MCF 10A (cell line): ENCODE measurements at regions of chr7 and their contacts with region 1.

Region 1: DNA sequence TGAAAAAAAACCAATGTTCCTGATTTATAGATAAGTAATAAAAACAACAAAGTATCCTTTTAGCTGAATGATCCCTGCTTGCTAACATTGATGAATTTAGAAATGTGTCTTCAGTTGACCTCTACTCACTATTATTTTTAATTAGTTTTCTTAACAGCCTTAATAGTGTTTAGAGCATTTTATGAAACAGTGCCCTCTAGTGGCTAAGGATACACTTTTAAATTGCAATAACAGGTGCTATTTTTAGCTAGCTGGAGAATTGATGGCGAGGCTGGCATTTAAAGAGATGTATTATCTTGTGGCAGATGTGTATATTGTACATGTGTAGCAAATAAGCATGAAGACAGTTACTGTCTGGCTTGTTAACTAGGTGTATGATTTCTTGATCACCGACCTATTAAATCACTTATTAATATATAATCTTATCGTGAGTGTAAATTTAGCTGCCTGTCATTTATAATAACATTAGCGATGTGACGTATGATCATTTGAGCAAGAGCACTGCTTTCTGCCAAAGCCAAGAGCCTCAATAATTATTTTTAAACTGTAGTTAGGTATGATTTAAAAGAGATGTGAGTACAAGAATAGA is 451.9 kb downstream of the DPP6 start:
- DNase-seq: peak; percentile 34
- H3K4me3 Mint-ChIP-seq: no peak overlapping the region
- H3K27ac Mint-ChIP-seq: no peak overlapping the region
- H3K4me1 Mint-ChIP-seq: no peaks in the 10 kb centered on the region
- H3K27me3 Mint-ChIP-seq: no peaks in the 10 kb centered on the region
- CTCF ChIP-seq: peak; percentile 44

Region 2: GRCh38 chr7:154469652-154470051 is 34.4 kb before region 1 on chr7:
- CTCF ChIA-PET with region 1: interaction called, 10 read pairs
- POLR2A ChIA-PET with region 1: no interaction called
- intact Hi-C with region 1: no loop called
- DNase-seq: no peak
- H3K4me3 Mint-ChIP-seq: no peak overlapping the region
- H3K27ac Mint-ChIP-seq: no peak overlapping the region
- H3K4me1 Mint-ChIP-seq: no peaks in the 10 kb centered on the region
- H3K27me3 Mint-ChIP-seq: no peaks in the 10 kb centered on the region
- CTCF ChIP-seq: no peak

Region 3: GRCh38 chr7:154493594-154493993 is 10.5 kb before region 1 on chr7:
- CTCF ChIA-PET with region 1: interaction called, 28 read pairs
- POLR2A ChIA-PET with region 1: interaction called, 3 read pairs
- intact Hi-C with region 1: no loop called
- DNase-seq: no peak
- H3K4me3 Mint-ChIP-seq: no peak overlapping the region
- H3K27ac Mint-ChIP-seq: no peak overlapping the region
- H3K4me1 Mint-ChIP-seq: no peaks in the 10 kb centered on the region
- H3K27me3 Mint-ChIP-seq: no peaks in the 10 kb centered on the region
- CTCF ChIP-seq: no peak

Region 4: GRCh38 chr7:154517768-154518167 is 13.7 kb after region 1 on chr7:
- CTCF ChIA-PET with region 1: interaction called, 22 read pairs
- POLR2A ChIA-PET with region 1: interaction called, 4 read pairs
- intact Hi-C with region 1: no loop called
- DNase-seq: no peak
- H3K4me3 Mint-ChIP-seq: no peak overlapping the region
- H3K27ac Mint-ChIP-seq: no peak overlapping the region
- H3K4me1 Mint-ChIP-seq: no peaks in the 10 kb centered on the region
- H3K27me3 Mint-ChIP-seq: no peaks in the 10 kb centered on the region
- CTCF ChIP-seq: no peak

Region 5: DNA sequence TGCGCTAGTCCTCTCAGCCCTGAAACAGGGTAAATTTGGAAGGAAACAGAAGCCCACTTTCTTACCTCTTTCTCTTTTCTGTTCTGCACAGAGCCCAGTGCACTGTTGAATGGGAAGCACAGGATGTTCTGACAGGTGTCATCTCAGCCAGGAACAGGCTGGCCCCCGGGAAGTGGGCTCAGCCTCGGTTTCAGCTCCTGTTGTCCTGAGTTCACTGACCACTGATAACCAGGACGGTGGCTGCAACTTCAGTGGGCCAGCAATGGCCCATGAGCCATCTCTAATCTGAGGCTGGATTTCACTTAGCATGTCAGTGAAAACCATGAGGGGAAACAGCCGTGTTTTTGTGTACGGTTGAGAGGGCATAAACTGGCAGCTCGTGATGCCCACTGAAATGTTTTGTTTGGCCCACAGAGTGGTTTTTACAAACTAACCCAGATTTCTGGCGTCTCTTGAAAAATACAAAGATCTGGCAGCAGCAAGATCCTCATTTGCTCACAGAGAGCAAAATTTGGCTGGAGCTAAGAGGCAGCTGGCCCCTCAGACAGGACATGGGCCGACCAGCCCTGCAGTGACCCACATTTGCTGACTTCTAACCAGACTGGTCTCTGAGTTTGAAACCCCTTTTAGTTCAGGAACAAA is 43.0 kb after region 1 on chr7:
- CTCF ChIA-PET with region 1: no interaction called
- POLR2A ChIA-PET with region 1: no interaction called
- intact Hi-C with region 1: no loop called
- DNase-seq: no peak
- H3K4me3 Mint-ChIP-seq: no peak overlapping the region
- H3K27ac Mint-ChIP-seq: no peak overlapping the region
- H3K4me1 Mint-ChIP-seq: no peaks in the 10 kb centered on the region
- H3K27me3 Mint-ChIP-seq: no peaks in the 10 kb centered on the region
- CTCF ChIP-seq: no peak

Region 6: DNA sequence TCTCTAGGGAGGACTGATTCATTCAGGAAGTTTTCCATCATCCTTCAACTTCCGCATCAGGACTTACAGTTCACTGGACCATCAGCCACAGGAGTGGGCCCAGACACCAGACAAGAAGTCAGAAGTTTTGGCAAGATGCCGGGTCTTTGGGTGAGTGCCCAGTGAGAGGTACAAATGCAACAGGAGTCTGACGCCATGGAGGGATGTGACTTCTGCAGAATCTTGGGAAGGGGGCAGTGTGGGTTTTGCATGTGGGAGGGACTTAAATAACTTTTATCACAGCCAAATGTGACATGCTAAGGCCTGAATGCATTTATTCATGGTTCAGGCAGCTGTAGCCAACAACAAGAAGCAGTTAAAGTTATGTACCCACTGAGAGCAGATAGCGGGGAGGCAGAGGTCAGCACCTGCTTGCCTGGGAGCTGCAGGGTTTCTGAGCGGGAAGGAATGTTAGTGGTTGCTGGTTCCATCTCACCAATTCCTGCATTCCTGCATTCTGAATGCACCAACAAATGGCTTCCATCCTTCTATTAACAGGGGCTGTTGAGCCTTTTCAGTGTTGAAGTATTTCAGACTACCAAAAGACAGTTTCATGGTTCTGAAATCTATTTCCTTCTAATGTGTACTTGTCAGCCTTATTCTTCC is 123.7 kb after region 1 on chr7:
- CTCF ChIA-PET with region 1: no interaction called
- POLR2A ChIA-PET with region 1: no interaction called
- intact Hi-C with region 1: no loop called
- DNase-seq: no peak
- H3K4me3 Mint-ChIP-seq: no peak overlapping the region
- H3K27ac Mint-ChIP-seq: no peak overlapping the region
- H3K4me1 Mint-ChIP-seq: no peaks in the 10 kb centered on the region
- H3K27me3 Mint-ChIP-seq: no peaks in the 10 kb centered on the region
- CTCF ChIP-seq: no peak

Region 7: DNA sequence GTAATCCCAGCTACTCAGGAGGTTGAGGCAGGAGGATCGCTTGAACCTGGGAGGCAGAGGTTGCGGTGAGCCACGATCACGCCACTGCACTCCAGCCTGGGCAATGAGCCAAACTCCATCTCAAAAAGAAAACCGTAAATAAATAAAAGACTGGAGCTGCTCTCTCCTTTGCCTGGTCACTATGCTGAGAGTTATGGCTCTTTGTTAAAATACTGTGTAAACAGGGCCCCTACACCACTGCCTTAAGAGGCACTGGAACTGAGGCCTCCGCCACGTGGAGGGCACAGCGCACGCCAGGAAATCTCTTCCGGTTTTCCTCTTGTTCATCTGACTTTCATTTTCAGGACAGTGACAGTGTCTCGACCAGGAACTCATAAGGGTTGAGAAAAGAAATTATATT is 375.6 kb after region 1 on chr7:
- CTCF ChIA-PET with region 1: no interaction called
- POLR2A ChIA-PET with region 1: no interaction called
- intact Hi-C with region 1: no loop called
- DNase-seq: no peak
- H3K4me3 Mint-ChIP-seq: no peak overlapping the region
- H3K27ac Mint-ChIP-seq: no peak overlapping the region
- H3K4me1 Mint-ChIP-seq: no peaks in the 10 kb centered on the region
- H3K27me3 Mint-ChIP-seq: no peaks in the 10 kb centered on the region
- CTCF ChIP-seq: no peak